CD8-positive, alpha-beta T cell (primary cell): ENCODE measurements at regions of chr3 and their contacts with region 1.

Region 1: GRCh38 chr3:8769088-8769822 is at the start of gene OXTR:
- DNase-seq: peak in 8 of 9 experiments; percentile 10 to 56 (median 35)
- ATAC-seq: peak; percentile 73
- H3K4me3 ChIP-seq: no peak within 1 kb of the TSS
- H3K4me3 Mint-ChIP-seq: peak within 1 kb of the TSS; percentile 50
- H3K27ac ChIP-seq: no peak within 1 kb of the TSS
- H3K27ac Mint-ChIP-seq: no peak within 1 kb of the TSS
- H3K4me1 ChIP-seq: no peaks in the 10 kb centered on the region
- H3K4me1 Mint-ChIP-seq: peaks cover 11% of the 10 kb centered on the region
- H3K27me3 ChIP-seq: peaks cover 0 to 6% of the 10 kb centered on the region in 2 experiments
- H3K27me3 Mint-ChIP-seq: peaks cover 32% of the 10 kb centered on the region
- CTCF ChIP-seq: peak; percentile 95
- total RNA-seq, gene OXTR: 0.22 TPM in 1 of 2 experiments, not detected in the other

Region 2: GRCh38 chr3:8128686-8129085 is 640.6 kb before region 1 on chr3:
- CTCF ChIA-PET with region 1: no interaction called
- POLR2A ChIA-PET with region 1: no interaction called
- intact Hi-C with region 1: no loop called
- DNase-seq: no peak
- ATAC-seq: no peak
- H3K4me3 ChIP-seq: no peak overlapping the region
- H3K4me3 Mint-ChIP-seq: no peak overlapping the region
- H3K27ac ChIP-seq: no peak overlapping the region
- H3K27ac Mint-ChIP-seq: no peak overlapping the region
- H3K4me1 ChIP-seq: no peaks in the 10 kb centered on the region
- H3K4me1 Mint-ChIP-seq: no peaks in the 10 kb centered on the region
- H3K27me3 ChIP-seq: no peaks in the 10 kb centered on the region
- H3K27me3 Mint-ChIP-seq: peaks cover 3% of the 10 kb centered on the region
- CTCF ChIP-seq: no peak

Region 3: DNA sequence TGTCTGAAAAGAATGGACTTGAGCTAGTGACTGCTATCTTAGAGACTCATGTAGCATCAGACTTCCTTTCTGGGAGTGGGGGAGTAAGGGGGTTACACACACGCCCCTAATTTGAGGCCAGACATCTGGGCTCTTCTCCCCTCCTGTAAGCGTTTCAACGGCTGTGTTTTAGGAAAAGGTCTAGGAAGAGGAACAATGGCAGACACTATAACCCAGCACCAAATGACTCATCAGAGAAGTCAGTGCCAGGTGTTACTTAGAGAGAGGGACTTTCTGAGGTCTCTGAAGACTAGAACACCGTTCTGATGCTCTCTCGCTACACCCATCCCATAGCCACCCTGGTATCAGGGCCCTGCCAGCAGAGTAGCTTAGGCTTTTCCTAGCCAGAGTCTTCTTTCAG is 190.2 kb before region 1 on chr3:
- CTCF ChIA-PET with region 1: no interaction called
- POLR2A ChIA-PET with region 1: no interaction called
- intact Hi-C with region 1: no loop called
- DNase-seq: no peak
- ATAC-seq: no peak
- H3K4me3 ChIP-seq: no peak overlapping the region
- H3K4me3 Mint-ChIP-seq: no peak overlapping the region
- H3K27ac ChIP-seq: no peak overlapping the region
- H3K27ac Mint-ChIP-seq: no peak overlapping the region
- H3K4me1 ChIP-seq: no peaks in the 10 kb centered on the region
- H3K4me1 Mint-ChIP-seq: no peaks in the 10 kb centered on the region
- H3K27me3 ChIP-seq: no peaks in the 10 kb centered on the region
- H3K27me3 Mint-ChIP-seq: no peaks in the 10 kb centered on the region
- CTCF ChIP-seq: no peak

Region 4: DNA sequence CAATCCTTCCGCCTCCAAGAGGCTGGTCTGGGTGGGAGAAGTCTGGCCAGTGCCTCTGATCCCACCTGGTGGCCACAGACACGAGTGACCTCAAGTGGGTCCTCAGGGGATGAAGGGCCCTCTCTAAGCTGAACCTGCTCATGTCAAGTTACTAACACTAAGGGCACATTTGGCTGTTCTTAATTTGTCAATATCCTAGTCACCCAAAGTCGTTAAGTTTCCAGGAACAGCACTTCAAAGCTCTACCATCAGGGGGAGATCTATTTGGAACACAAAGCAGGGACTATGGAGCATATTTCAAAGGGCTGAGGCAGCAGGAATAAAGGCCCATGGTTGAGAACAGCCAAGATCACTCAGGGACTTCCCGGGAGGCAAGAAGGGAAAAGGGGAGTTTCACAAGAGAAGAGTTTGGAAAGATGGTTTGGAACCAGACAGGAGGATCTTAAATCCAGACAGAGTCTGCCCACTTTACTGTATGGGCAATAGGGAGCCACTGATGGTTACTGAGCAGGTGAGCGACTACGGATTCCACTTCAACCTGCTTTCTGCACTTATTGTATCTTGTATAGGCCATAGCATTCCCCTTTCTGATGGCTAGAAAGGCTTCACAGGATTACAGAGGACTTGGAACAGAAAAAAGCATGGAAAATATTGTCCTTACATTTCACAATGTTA is 13.6 kb before region 1 on chr3:
- CTCF ChIA-PET with region 1: interaction called, 12 read pairs
- POLR2A ChIA-PET with region 1: no interaction called
- intact Hi-C with region 1: no loop called
- DNase-seq: no peak
- ATAC-seq: no peak
- H3K4me3 ChIP-seq: no peak overlapping the region
- H3K4me3 Mint-ChIP-seq: no peak overlapping the region
- H3K27ac ChIP-seq: no peak overlapping the region
- H3K27ac Mint-ChIP-seq: no peak overlapping the region
- H3K4me1 ChIP-seq: no peaks in the 10 kb centered on the region
- H3K4me1 Mint-ChIP-seq: no peaks in the 10 kb centered on the region
- H3K27me3 ChIP-seq: no peaks in the 10 kb centered on the region
- H3K27me3 Mint-ChIP-seq: no peaks in the 10 kb centered on the region
- CTCF ChIP-seq: no peak

Region 5: GRCh38 chr3:8931342-8931741 is 162.1 kb after region 1 on chr3:
- CTCF ChIA-PET with region 1: no interaction called
- POLR2A ChIA-PET with region 1: no interaction called
- intact Hi-C with region 1: no loop called
- DNase-seq: no peak
- ATAC-seq: no peak
- H3K4me3 ChIP-seq: no peak overlapping the region
- H3K4me3 Mint-ChIP-seq: no peak overlapping the region
- H3K27ac ChIP-seq: no peak overlapping the region
- H3K27ac Mint-ChIP-seq: no peak overlapping the region
- H3K4me1 ChIP-seq: no peaks in the 10 kb centered on the region
- H3K4me1 Mint-ChIP-seq: no peaks in the 10 kb centered on the region
- H3K27me3 ChIP-seq: no peaks in the 10 kb centered on the region
- H3K27me3 Mint-ChIP-seq: no peaks in the 10 kb centered on the region
- CTCF ChIP-seq: no peak

Region 6: DNA sequence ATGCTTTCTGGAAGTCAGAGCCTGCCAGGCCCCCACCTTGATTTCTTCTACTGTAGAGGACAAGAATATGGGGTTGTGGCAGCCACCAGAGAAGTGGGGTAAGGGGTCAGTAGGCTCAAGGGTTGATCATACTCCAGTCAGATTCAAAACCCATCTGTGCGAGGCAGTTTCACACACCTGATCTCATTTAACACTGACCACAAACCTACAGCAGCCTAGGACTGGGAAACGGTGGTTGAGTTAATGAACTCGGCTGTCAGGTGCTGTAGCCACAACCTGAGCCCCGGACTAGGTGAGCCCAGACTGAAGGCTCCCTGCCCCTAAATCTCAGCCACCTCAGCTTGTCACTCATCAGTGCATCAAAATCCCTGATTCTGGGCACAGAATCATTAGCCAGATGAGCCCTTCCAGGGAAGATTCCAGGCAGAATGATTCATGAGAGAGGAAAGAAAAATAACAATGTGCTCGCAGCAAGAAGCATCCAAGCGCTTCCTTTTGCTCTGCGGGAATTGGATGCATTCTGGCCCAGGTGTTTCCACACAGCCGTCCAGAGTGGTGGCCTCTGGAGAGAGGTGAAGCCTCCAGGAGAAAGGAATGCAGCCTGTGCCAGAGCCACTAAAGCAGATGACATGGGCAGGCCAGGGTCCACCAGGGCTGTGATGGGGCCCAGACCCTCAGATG is 378.1 kb after region 1 on chr3:
- CTCF ChIA-PET with region 1: no interaction called
- POLR2A ChIA-PET with region 1: no interaction called
- intact Hi-C with region 1: no loop called
- DNase-seq: no peak
- ATAC-seq: no peak
- H3K4me3 ChIP-seq: no peak overlapping the region
- H3K4me3 Mint-ChIP-seq: no peak overlapping the region
- H3K27ac ChIP-seq: no peak overlapping the region
- H3K27ac Mint-ChIP-seq: no peak overlapping the region
- H3K4me1 ChIP-seq: no peaks in the 10 kb centered on the region
- H3K4me1 Mint-ChIP-seq: no peaks in the 10 kb centered on the region
- H3K27me3 ChIP-seq: no peaks in the 10 kb centered on the region
- H3K27me3 Mint-ChIP-seq: peaks cover 8% of the 10 kb centered on the region
- CTCF ChIP-seq: no peak